ENCODE measurements at regions of chr17 and their contacts with region 1.

Region 1: DNA sequence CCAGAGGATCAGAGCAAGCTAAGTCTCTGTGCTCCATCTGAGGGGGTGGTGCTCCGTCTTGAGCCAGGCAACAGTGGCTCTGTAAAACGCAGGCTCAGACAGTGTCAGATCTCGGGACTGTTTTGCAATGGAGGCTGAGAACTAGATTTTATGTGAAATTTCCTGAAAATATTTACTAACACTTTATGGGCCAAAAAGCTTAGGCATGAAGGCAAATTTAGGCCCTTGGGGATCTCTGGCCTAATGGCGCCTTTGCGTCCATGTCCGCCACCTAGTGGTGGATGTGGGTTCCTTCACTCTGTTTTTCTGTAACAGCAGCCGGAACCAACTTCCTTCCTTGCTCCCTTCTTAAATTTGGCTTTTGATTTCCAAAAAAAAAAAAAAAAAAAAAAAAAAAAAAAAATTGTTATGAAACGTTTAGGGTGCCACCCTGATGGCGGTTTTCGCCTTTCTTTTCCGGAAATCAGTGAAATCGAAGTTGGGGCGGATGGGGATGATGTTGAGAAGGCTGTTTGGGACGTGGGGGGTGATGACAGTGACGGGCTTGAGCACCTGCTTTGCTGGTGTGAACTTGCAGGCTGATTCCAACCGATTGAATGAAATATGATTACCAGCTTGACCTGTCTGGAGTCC is 14.0 kb upstream of the ELAC2 start:
- DNase-seq: peak; percentile 45
- ATAC-seq: peak; percentile 82
- H3K4me3 ChIP-seq: no peak overlapping the region
- H3K27ac ChIP-seq: no peak overlapping the region
- H3K4me1 ChIP-seq: no peaks in the 10 kb centered on the region
- H3K27me3 ChIP-seq: no peaks in the 10 kb centered on the region
- CTCF ChIP-seq: peak; percentile 47 to 89 (median 86); a peak in 5 of 6 replicates
- POLR2A ChIP-seq: no peak
- RAD21 ChIP-seq: peak; percentile 38; the same call in 1 of the 2 replicates

Region 2: DNA sequence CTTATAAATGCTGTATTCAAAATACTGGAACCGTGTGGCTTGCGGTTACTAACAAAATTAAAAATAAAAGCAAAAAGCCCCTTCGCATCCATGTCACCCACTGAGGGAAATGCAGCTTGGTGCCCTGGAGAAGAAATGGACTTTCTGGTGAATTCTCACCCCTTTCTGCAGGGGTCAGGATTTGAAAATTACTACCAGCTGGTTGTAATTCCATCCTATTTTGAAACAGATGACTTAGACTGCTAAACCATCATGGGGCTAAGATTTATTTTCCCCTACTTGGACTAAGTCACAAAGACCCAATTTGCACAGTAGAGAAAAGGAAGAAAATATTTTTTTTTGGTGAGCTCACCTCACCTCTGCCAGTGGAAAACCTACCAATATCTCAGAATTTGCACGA is 477.6 kb before region 1 on chr17:
- CTCF ChIA-PET with region 1: no interaction called
- POLR2A ChIA-PET with region 1: no interaction called
- RAD21 ChIA-PET with region 1: no interaction called
- intact Hi-C with region 1: no loop called
- DNase-seq: no peak
- ATAC-seq: no peak
- H3K4me3 ChIP-seq: no peak overlapping the region
- H3K27ac ChIP-seq: no peak overlapping the region
- H3K4me1 ChIP-seq: no peaks in the 10 kb centered on the region
- H3K27me3 ChIP-seq: peaks cover 34% of the 10 kb centered on the region
- CTCF ChIP-seq: no peak
- POLR2A ChIP-seq: no peak
- RAD21 ChIP-seq: no peak

Region 3: DNA sequence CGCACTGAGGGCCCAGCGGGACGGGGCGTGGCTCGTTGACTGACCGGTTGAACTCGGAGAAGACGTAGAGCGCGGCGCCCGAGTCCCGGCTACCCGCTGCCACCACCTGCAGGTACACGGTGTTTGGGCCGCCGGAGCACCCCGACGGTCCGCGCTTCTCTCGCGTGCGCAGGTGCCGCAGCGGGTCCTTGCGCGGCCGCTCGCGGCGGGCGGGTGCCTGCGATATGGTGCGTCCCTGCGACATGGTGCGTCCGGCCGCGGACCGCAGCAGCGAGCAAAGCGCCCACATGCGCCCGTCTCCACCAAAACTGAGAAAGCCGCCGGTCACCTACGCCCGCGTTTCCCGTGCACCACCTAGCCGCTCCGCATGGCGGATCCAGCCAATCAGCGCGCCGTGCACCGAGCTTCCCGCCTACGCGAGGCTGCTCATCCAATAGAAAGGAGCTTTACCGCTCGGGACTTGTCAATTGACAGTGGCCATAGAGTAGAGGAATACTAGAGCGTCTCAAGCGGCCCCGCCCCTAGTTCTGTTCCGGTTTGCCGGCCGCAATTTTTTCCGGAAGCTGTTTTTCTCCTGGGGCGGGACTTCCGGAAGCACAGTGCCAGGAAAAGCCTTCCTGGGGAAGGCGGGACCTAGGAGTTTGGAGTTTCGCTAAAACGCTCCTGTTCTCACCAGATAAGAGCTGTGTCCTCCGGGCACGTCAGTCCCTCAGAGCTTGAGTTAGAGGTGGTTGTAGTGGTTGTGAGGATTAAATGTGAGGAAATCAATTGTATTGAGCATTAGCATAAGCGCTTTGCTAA is 14.0 kb before region 1 on chr17 and contains the start of gene ELAC2:
- CTCF ChIA-PET with region 1: interaction called, 46 read pairs
- POLR2A ChIA-PET with region 1: interaction called, 19 read pairs
- RAD21 ChIA-PET with region 1: no interaction called
- intact Hi-C with region 1: no loop called
- DNase-seq: peak; percentile 97
- ATAC-seq: peak; percentile 97
- H3K4me3 ChIP-seq: peak within 1 kb of the TSS; percentile 96 to 97
- H3K27ac ChIP-seq: peak within 1 kb of the TSS; percentile 99
- H3K4me1 ChIP-seq: peaks cover 4 to 10% of the 10 kb centered on the region in 2 experiments; a peak in 3 of 4 replicates
- H3K27me3 ChIP-seq: no peaks in the 10 kb centered on the region
- CTCF ChIP-seq: no peak
- POLR2A ChIP-seq: peak; percentile 92
- RAD21 ChIP-seq: no peak
- total RNA-seq, gene ELAC2: 84.5 TPM

Measured in HCT116 (cell line).